Endothelial cell of umbilical vein (primary cell): ENCODE measurements at regions of chr5 and their contacts with region 1.

Region 1: GRCh38 chr5:28473531-28474107 is 1435.2 kb upstream of the CDH9 start:
- DNase-seq: peak; percentile 1
- H3K4me3 ChIP-seq: no peak overlapping the region
- H3K27ac ChIP-seq: no peak overlapping the region
- H3K4me1 ChIP-seq: no peaks in the 10 kb centered on the region
- H3K27me3 ChIP-seq: no peaks in the 10 kb centered on the region
- CTCF ChIP-seq: no peak
- POLR2A ChIP-seq: no peak

Region 2: GRCh38 chr5:28190011-28190410 is 283.6 kb before region 1 on chr5:
- CTCF ChIA-PET with region 1: no interaction called
- POLR2A ChIA-PET with region 1: no interaction called
- dilution Hi-C with region 1: no loop called
- intact Hi-C with region 1: no loop called
- DNase-seq: no peak
- H3K4me3 ChIP-seq: no peak overlapping the region
- H3K27ac ChIP-seq: no peak overlapping the region
- H3K4me1 ChIP-seq: no peaks in the 10 kb centered on the region
- H3K27me3 ChIP-seq: no peaks in the 10 kb centered on the region
- CTCF ChIP-seq: no peak
- POLR2A ChIP-seq: no peak

Region 3: GRCh38 chr5:28576022-28576421 is 102.4 kb after region 1 on chr5:
- CTCF ChIA-PET with region 1: interaction called, 17 read pairs
- POLR2A ChIA-PET with region 1: no interaction called
- dilution Hi-C with region 1: no loop called
- intact Hi-C with region 1: no loop called
- DNase-seq: peak; percentile 1
- H3K4me3 ChIP-seq: no peak overlapping the region
- H3K27ac ChIP-seq: no peak overlapping the region
- H3K4me1 ChIP-seq: no peaks in the 10 kb centered on the region
- H3K27me3 ChIP-seq: no peaks in the 10 kb centered on the region
- CTCF ChIP-seq: peak in 1 of 2 donors; percentile 3
- POLR2A ChIP-seq: no peak

Region 4: GRCh38 chr5:28766565-28767158 is 293.0 kb after region 1 on chr5:
- CTCF ChIA-PET with region 1: interaction called, 4 read pairs
- POLR2A ChIA-PET with region 1: no interaction called
- dilution Hi-C with region 1: no loop called
- intact Hi-C with region 1: loop called (anchors 2 kb)
- DNase-seq: peak; percentile 6
- H3K4me3 ChIP-seq: no peak overlapping the region
- H3K27ac ChIP-seq: no peak overlapping the region
- H3K4me1 ChIP-seq: no peaks in the 10 kb centered on the region
- H3K27me3 ChIP-seq: no peaks in the 10 kb centered on the region
- CTCF ChIP-seq: no peak
- POLR2A ChIP-seq: no peak